ENCODE measurements at regions of chrX and their contacts with region 1.

Region 1: DNA sequence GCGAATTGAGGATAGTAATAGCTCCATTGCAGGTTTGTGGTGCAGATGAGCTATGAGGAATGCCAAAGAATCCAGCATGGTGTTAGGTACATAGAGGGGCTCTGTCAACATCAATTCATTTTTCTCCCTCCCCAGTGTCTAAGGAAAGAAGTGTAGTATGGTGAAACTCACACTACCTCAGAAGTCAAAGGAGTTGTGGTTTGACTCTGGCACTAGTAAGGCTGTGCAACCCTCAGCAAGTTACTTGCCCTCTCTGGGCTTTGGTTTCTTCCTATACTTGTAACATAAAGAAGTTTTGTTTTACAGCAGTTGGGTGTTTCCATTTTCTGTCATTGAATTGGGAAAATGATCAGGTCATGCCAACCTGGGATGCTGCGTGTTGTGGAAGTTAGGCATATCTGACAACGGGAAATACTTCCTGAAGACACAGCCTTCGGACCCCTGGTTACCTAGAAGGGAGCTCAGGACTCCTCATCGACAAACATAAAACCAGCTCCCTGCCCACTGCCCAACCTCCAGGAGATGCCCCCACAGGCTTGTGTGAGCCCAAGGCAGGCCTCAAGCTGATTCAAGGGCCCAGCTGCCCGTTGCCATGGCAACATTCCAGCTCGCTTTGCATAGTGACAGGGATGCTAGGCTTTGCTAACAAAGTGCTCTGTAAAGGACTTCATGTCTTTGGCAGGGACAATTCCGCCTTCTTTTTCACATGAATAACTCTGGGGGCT is 71.4 kb downstream of the RTL5 start:
- DNase-seq: peak in 1 of 2 donors; percentile 75
- H3K4me3 ChIP-seq: no peak overlapping the region
- H3K27ac ChIP-seq: no peak overlapping the region
- H3K4me1 ChIP-seq: peaks cover 0 to 5% of the 10 kb centered on the region in 2 donors
- H3K27me3 ChIP-seq: no peaks in the 10 kb centered on the region
- CTCF ChIP-seq: no peak

Region 2: DNA sequence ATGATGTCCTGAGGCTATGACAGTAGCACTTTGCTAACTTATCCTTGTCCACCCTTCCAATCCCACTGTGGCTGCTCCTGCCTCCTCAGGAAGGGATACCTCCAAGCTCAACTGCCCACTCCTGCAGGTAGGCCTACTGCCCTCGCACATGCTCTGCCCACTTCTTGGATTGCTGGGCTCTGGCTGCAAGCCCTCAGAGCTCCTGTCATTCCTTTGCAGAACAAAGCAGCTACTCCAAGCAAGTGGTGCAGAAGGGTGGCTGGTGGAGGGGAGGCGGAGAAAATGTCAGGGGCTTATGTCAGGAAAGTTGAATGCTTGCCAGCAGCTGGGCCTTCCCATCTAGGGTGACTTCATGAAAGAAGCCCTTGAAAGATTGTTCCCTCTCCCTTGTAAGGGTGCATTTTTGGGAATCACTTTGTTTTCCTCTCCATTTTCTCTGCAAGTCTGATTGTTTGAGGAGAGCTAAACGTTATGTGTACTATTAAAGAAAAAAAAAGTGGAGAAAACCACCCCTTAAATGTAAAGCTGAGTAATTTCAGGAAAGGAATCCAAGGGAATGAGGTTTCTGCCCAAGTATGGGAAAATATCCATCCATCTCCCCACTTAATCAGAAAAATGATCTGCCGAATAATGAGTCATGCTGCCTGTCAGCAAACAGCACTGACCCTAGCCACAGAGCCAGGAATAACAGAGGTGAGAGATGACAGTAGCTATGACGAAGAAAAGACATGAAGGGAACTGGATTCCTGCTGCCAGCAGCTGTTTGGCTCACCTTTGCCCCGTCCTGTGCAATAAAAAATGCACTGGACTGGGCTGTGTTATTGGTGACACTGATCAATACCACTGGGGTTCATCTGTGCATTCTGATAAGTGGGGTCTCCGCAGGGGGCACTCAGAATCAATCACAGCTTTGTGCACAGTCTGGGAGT is 30.6 kb before region 1 on chrX:
- intact Hi-C with region 1: loop called (anchors 5 kb)
- DNase-seq: peak in 1 of 2 donors; percentile 67
- H3K4me3 ChIP-seq: peak overlapping the region in 1 of 2 donors; percentile 61
- H3K27ac ChIP-seq: peak overlapping the region; percentile 12 to 64
- H3K4me1 ChIP-seq: no peaks in the 10 kb centered on the region
- H3K27me3 ChIP-seq: no peaks in the 10 kb centered on the region
- CTCF ChIP-seq: no peak

Region 3: GRCh38 chrX:72121383-72121782 is 61.0 kb after region 1 on chrX:
- intact Hi-C with region 1: loop called (anchors 5 kb)
- DNase-seq: no peak
- H3K4me3 ChIP-seq: no peak overlapping the region
- H3K27ac ChIP-seq: peak overlapping the region; percentile 31 to 68
- H3K4me1 ChIP-seq: peaks cover 4 to 20% of the 10 kb centered on the region in 2 donors
- H3K27me3 ChIP-seq: no peaks in the 10 kb centered on the region
- CTCF ChIP-seq: no peak

Measured in ascending aorta (tissue), 2 donors.